ENCODE measurements at regions of chr7 and their contacts with region 1.

Region 1: GRCh38 chr7:132154248-132154647 is 422.0 kb downstream of the PLXNA4 start:
- DNase-seq: no peak
- H3K4me3 ChIP-seq: no peak overlapping the region
- H3K27ac ChIP-seq: no peak overlapping the region
- H3K4me1 ChIP-seq: no peaks in the 10 kb centered on the region
- H3K27me3 ChIP-seq: no peaks in the 10 kb centered on the region
- CTCF ChIP-seq: no peak

Region 2: GRCh38 chr7:131945313-131945911 is 208.8 kb before region 1 on chr7:
- intact Hi-C with region 1: loop called (anchors 10 kb)
- DNase-seq: peak in 1 of 2 donors; percentile 52
- H3K4me3 ChIP-seq: peak overlapping the region; percentile 21 to 44
- H3K27ac ChIP-seq: no peak overlapping the region
- H3K4me1 ChIP-seq: peaks cover 0 to 36% (median 25%) of the 10 kb centered on the region in 4 donors
- H3K27me3 ChIP-seq: peaks cover 0 to 33% of the 10 kb centered on the region in 2 donors
- CTCF ChIP-seq: peak; percentile 82 to 96